ENCODE measurements at regions of chr1 and their contacts with region 1.

Region 1: DNA sequence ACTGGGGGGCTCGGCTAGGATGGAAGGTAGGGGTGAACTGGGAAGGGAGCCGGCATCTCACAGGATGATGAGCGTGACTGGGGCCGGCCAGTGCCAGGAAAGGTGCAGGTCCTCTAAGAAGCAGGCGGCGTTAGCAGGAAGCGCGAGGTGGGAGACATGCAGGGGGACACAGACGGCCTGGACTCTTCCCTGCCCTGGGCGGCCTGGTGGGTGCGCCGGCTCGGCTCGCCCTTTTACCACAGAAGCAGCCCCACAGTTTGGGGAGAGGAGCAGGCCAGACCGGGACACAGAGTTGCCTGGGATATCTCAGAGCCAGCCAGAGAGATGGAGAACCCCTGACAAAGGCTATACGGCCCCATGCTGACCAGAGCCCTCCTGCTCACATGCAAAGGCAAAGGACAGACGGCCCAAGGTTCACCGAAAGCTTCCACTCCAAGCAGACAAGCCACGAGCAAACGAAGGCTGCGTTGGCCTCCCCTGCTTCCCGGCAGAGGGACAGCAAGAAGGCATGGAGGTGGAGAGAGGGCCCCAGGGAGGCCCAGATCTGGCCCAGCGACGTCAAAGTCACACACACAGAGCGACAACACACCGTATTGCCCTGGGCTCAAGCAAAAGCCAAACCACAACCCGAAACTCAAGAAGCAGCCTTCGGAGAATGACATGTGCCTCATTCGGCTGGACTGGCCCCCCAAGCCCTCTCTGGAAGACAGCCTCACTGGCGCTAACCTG is 14.9 kb upstream of the ALDH4A1 start:
- DNase-seq: no peak
- H3K4me3 ChIP-seq: no peak overlapping the region
- H3K27ac ChIP-seq: no peak overlapping the region
- H3K4me1 ChIP-seq: peaks cover 7% of the 10 kb centered on the region
- H3K27me3 ChIP-seq: no peaks in the 10 kb centered on the region
- CTCF ChIP-seq: no peak
- POLR2A ChIP-seq: no peak

Region 2: GRCh38 chr1:18890711-18891425 is 26.4 kb before region 1 on chr1:
- intact Hi-C with region 1: loop called (anchors 1 kb)
- DNase-seq: no peak
- H3K4me3 ChIP-seq: no peak overlapping the region
- H3K27ac ChIP-seq: no peak overlapping the region
- H3K4me1 ChIP-seq: no peaks in the 10 kb centered on the region
- H3K27me3 ChIP-seq: no peaks in the 10 kb centered on the region
- CTCF ChIP-seq: no peak
- POLR2A ChIP-seq: no peak

Region 3: DNA sequence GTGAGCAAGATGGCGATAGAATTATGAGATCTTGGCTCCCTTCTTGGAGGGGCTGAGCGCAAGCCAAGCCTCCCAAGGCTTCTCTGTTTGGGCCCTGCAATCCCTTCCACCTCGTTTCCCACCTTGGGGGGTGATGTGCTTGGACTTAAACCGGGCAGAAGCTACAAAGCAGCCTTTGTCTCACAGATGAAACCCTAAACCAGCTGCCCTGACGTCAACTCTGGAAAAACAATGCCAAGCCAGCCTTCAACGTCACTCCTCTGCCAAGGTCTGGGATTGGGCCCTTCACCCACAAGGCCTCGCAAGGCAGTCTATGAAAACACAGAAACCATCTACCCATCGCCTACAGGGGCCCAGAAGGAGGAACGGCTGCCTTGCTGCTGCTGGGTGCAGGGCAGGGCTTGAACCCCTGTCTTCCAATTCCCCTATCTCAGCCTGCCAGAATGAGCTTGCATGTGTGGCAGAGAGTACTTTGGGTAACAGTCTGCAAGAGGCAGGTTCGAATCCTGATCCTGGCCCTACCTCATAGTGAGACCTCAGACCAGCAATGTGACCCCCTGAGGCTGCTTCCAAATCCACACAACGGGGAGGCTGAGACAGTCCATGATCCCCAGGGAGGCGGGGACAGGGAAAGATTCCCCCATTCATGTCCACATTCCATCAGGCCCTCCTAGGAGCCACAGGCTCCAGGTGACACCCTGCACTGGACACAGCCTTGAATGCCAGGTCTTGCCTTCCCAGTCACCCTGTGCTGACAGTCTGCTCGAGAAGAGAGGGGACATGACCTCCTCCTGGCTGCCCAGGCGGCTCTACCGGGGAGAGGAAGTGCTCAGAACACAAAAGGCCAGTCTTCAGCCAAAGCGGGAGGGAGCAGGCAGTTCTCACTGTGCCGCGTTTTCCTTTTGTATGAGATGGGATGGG is 24.2 kb after region 1 on chr1:
- intact Hi-C with region 1: no loop called
- DNase-seq: peak; percentile 70
- H3K4me3 ChIP-seq: no peak overlapping the region
- H3K27ac ChIP-seq: peak overlapping the region; percentile 58 to 70
- H3K4me1 ChIP-seq: peaks cover 34% of the 10 kb centered on the region
- H3K27me3 ChIP-seq: no peaks in the 10 kb centered on the region
- CTCF ChIP-seq: no peak
- POLR2A ChIP-seq: peak; percentile 33

Measured in prostate gland (tissue), 2 donors.